Naive thymus-derived CD4-positive, alpha-beta T cell (primary cell): ENCODE measurements at regions of chr13 and their contacts with region 1.

Region 1: GRCh38 chr13:49495783-49496762 is at the start of gene PHF11:
- DNase-seq: peak; percentile 66 to 86 (median 83)
- ATAC-seq: peak; percentile 90
- H3K4me3 ChIP-seq: peak within 1 kb of the TSS; percentile 77
- H3K4me3 Mint-ChIP-seq: peak within 1 kb of the TSS; percentile 91 to 99 (median 97)
- H3K27ac ChIP-seq: peak within 1 kb of the TSS; percentile 90
- H3K27ac Mint-ChIP-seq: peak within 1 kb of the TSS; percentile 81 to 100 (median 99)
- H3K4me1 ChIP-seq: peaks cover 25 to 34% of the 10 kb centered on the region in 2 donors
- H3K4me1 Mint-ChIP-seq: peaks cover 34 to 59% (median 53%) of the 10 kb centered on the region in 7 donors
- H3K27me3 ChIP-seq: no peaks in the 10 kb centered on the region
- H3K27me3 Mint-ChIP-seq: no peaks in the 10 kb centered on the region
- total RNA-seq, gene PHF11: 96.0 to 132 (median 126) TPM

Region 2: DNA sequence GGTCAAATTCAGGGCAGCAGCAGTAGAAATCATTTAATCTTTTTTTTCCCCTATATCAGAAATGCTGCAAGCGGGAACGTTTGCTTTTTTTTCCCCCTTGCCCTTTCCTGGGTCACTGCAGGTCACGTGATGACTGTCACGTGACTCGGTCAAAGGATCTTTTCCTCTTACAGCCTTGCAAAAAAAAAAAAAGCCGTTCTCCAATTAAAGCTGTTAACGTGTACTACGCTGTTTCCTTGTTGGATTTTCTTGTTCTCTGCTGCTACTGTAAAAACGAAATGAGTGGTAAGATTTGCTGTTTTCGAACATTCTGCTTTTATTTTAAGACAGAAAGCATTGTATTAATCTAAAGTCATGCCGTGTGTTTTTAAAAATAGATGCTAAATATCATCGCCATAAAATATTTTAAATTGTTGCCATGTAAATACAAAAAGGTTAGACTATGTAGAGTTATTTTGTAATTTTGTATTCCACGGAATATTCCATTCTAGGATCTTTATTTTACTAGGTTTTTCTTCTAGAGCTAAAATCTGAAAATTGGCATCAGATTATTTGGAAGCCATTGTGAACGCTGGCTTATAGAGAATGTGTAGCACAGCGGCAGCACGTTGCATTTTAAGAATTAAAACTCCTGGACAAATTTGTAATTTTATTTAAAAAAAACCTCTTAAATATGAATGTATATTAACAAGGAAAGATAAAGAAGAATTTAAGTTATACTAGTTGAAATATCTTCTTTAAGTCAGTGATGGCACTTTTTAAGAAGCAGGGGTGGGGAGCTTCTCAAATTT is 385.8 kb before region 1 on chr13:
- CTCF ChIA-PET with region 1: no interaction called
- POLR2A ChIA-PET with region 1: no interaction called
- intact Hi-C with region 1: loop called (anchors 5 kb)
- DNase-seq: peak; percentile 36 to 76 (median 68)
- ATAC-seq: peak; percentile 82
- H3K4me3 ChIP-seq: peak overlapping the region; percentile 75
- H3K4me3 Mint-ChIP-seq: peak overlapping the region; percentile 79 to 94 (median 90)
- H3K27ac ChIP-seq: peak overlapping the region; percentile 80
- H3K27ac Mint-ChIP-seq: peak overlapping the region; percentile 79 to 91 (median 90)
- H3K4me1 ChIP-seq: peaks cover 11 to 25% of the 10 kb centered on the region in 2 donors
- H3K4me1 Mint-ChIP-seq: peaks cover 16 to 48% (median 30%) of the 10 kb centered on the region in 7 donors
- H3K27me3 ChIP-seq: no peaks in the 10 kb centered on the region
- H3K27me3 Mint-ChIP-seq: no peaks in the 10 kb centered on the region

Region 3: DNA sequence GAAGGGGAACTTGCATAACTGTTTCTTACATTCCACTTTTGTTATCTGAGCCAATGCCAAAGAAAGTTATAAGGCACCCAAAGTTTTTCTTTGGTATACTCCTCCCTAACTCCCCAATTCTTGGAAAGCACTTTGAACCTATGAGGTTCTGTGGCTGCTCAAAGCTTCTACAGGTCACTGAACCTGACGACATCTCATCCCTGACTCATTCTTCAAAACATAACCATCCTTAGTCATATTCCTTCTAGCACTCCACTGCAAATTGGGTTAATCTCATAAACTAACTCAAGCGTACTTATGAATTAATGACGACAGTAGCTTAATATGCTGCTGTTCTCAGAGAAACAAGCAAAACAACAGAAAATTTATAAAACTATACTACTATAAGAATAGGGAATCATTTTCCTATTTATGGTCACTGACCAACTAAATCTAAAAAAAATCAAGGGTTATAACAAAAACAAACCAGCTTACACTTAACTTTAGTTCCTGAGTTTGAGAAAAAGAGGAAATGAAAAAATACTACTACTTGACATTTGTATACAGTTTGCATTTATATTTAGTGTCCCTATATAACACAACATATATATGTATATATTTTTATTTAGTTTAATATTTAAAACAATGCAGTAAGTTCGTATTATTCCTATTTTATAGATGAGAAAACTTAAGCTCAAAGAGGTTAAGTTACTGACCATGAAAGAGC is 121.3 kb before region 1 on chr13:
- CTCF ChIA-PET with region 1: no interaction called
- POLR2A ChIA-PET with region 1: no interaction called
- intact Hi-C with region 1: loop called in 1 of 2 experiments (anchors 5 kb)
- DNase-seq: no peak
- ATAC-seq: no peak
- H3K4me3 ChIP-seq: no peak overlapping the region
- H3K4me3 Mint-ChIP-seq: peak overlapping the region in 1 of 10 donors; percentile 20
- H3K27ac ChIP-seq: no peak overlapping the region
- H3K27ac Mint-ChIP-seq: peak overlapping the region in 1 of 9 donors; percentile 42
- H3K4me1 ChIP-seq: peaks cover 6 to 20% of the 10 kb centered on the region in 2 donors
- H3K4me1 Mint-ChIP-seq: peaks cover 6 to 42% (median 33%) of the 10 kb centered on the region in 7 donors
- H3K27me3 ChIP-seq: no peaks in the 10 kb centered on the region
- H3K27me3 Mint-ChIP-seq: peaks cover 0 to 15% (median 4%) of the 10 kb centered on the region in 5 donors

Region 4: DNA sequence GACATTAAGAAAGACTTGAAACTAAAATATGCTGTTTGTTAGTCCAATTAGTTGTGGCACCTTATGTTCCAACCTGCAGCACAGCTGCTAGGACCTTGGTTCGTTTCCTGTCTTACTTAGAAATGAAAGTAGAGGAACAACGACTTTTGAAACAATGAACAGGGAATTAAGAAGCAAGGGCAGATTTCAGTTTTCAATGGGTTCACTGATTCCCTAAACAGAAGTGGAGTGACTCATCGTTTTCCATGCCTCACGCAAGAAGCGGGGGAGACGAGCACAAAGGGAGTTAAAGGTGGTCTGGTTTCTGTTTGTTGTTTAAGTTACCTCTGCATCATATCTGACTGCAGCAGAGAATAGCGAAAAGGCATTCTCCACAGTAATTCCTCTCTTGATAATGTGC is 44.5 kb after region 1 on chr13:
- CTCF ChIA-PET with region 1: no interaction called
- POLR2A ChIA-PET with region 1: interaction called, 19 read pairs
- intact Hi-C with region 1: loop called (anchors 1 to 5 kb)
- DNase-seq: peak in 6 of 9 donors; percentile 25 to 46 (median 30)
- ATAC-seq: peak; percentile 44
- H3K4me3 ChIP-seq: peak overlapping the region; percentile 38
- H3K4me3 Mint-ChIP-seq: peak overlapping the region; percentile 79 to 89 (median 83)
- H3K27ac ChIP-seq: peak overlapping the region; percentile 76
- H3K27ac Mint-ChIP-seq: peak overlapping the region; percentile 89 to 99 (median 94)
- H3K4me1 ChIP-seq: peaks cover 0 to 18% of the 10 kb centered on the region in 2 donors
- H3K4me1 Mint-ChIP-seq: peaks cover 5 to 26% (median 23%) of the 10 kb centered on the region in 7 donors
- H3K27me3 ChIP-seq: no peaks in the 10 kb centered on the region
- H3K27me3 Mint-ChIP-seq: no peaks in the 10 kb centered on the region

Region 5: GRCh38 chr13:49690992-49691886 is 195.2 kb after region 1 on chr13 and contains the start of gene EBPL:
- CTCF ChIA-PET with region 1: no interaction called
- POLR2A ChIA-PET with region 1: no interaction called
- intact Hi-C with region 1: loop called in 1 of 2 experiments (anchors 1 kb)
- DNase-seq: peak; percentile 57 to 91 (median 73)
- ATAC-seq: peak; percentile 97
- H3K4me3 ChIP-seq: peak within 1 kb of the TSS; percentile 67
- H3K4me3 Mint-ChIP-seq: peak within 1 kb of the TSS; percentile 88 to 96 (median 92)
- H3K27ac ChIP-seq: peak within 1 kb of the TSS; percentile 56
- H3K27ac Mint-ChIP-seq: peak within 1 kb of the TSS; percentile 73 to 91 (median 81)
- H3K4me1 ChIP-seq: peaks cover 0 to 17% of the 10 kb centered on the region in 2 donors
- H3K4me1 Mint-ChIP-seq: peaks cover 21 to 58% (median 45%) of the 10 kb centered on the region in 7 donors
- H3K27me3 ChIP-seq: no peaks in the 10 kb centered on the region
- H3K27me3 Mint-ChIP-seq: no peaks in the 10 kb centered on the region
- total RNA-seq, gene EBPL: 13.3 to 34.9 (median 20.4) TPM

Region 6: DNA sequence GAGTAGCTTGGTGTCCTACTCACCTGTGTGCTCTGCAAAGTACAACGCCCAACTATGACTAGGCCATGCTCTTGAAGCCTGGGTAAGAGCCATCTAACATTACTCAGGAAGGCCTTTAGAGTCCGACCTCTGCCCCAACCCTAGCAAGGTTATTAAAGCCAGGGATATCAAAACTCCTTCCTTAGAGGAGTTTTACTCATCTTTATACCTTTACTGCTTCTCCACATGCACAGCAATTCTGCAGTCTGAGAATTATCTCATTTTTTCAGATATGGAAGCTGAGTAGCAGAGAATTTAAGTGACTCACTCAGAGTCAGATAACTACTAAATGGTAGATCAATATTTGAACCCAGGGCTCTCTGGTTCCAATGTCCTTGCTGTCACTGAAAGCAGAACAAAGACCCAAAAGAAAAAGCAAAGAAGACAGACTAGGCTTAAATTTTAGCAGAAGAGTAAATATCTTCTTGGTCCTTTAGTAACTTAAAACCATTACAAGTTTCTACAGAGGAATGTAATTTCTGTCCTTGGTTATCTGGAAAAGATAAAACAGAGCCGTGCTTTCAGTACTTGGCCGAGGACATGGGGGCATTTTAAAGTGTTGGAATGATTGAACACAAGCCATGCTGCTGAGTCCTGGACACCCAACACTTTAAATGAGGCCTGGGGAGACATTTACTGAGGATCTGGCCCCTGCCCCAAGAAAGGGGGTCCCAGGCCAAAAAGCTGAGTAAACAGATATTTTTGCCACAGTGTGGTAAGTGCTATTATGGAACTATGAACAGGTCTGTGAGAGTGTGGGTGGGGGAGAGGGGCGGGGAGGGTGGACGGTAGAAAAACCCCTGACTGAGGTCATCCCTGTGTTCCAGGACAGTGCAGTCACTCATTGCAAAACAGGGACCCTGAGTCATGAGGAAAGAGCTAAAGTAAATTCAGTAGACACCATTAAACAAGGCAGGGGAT is 314.8 kb after region 1 on chr13:
- CTCF ChIA-PET with region 1: no interaction called
- POLR2A ChIA-PET with region 1: no interaction called
- intact Hi-C with region 1: no loop called
- DNase-seq: no peak
- ATAC-seq: no peak
- H3K4me3 ChIP-seq: no peak overlapping the region
- H3K4me3 Mint-ChIP-seq: no peak overlapping the region
- H3K27ac ChIP-seq: no peak overlapping the region
- H3K27ac Mint-ChIP-seq: no peak overlapping the region
- H3K4me1 ChIP-seq: no peaks in the 10 kb centered on the region
- H3K4me1 Mint-ChIP-seq: no peaks in the 10 kb centered on the region
- H3K27me3 ChIP-seq: no peaks in the 10 kb centered on the region
- H3K27me3 Mint-ChIP-seq: peaks cover 5 to 46% (median 14%) of the 10 kb centered on the region in 5 donors

Region 7: GRCh38 chr13:50130123-50130946 is 634.3 kb after region 1 on chr13:
- CTCF ChIA-PET with region 1: interaction called, 3 read pairs
- POLR2A ChIA-PET with region 1: no interaction called
- intact Hi-C with region 1: loop called (anchors 5 kb)
- DNase-seq: peak in 5 of 9 donors; percentile 22 to 47 (median 38)
- ATAC-seq: peak; percentile 17
- H3K4me3 ChIP-seq: peak overlapping the region; percentile 46
- H3K4me3 Mint-ChIP-seq: peak overlapping the region; percentile 70 to 94 (median 79)
- H3K27ac ChIP-seq: no peak overlapping the region
- H3K27ac Mint-ChIP-seq: peak overlapping the region; percentile 34 to 82 (median 62)
- H3K4me1 ChIP-seq: peaks cover 46 to 52% of the 10 kb centered on the region in 2 donors
- H3K4me1 Mint-ChIP-seq: peaks cover 21 to 64% (median 53%) of the 10 kb centered on the region in 7 donors
- H3K27me3 ChIP-seq: peaks cover 30 to 59% of the 10 kb centered on the region in 2 donors
- H3K27me3 Mint-ChIP-seq: peaks cover 38 to 71% (median 61%) of the 10 kb centered on the region in 5 donors